ENCODE measurements at regions of chr15 and their contacts with region 1.

Region 1: GRCh38 chr15:73695804-73696640 is 11.8 kb downstream of the CD276 start:
- DNase-seq: no peak
- H3K4me3 ChIP-seq: peak overlapping the region in 1 of 3 donors; percentile 26
- H3K27ac ChIP-seq: peak overlapping the region; percentile 33 to 74
- H3K4me1 ChIP-seq: peaks cover 10 to 12% of the 10 kb centered on the region in 2 donors
- H3K27me3 ChIP-seq: no peaks in the 10 kb centered on the region
- CTCF ChIP-seq: no peak
- POLR2A ChIP-seq: no peak

Region 2: GRCh38 chr15:73674587-73674986 is 21.4 kb before region 1 on chr15:
- intact Hi-C with region 1: loop called (anchors 1 kb)
- DNase-seq: no peak
- H3K4me3 ChIP-seq: no peak overlapping the region
- H3K27ac ChIP-seq: no peak overlapping the region
- H3K4me1 ChIP-seq: no peaks in the 10 kb centered on the region
- H3K27me3 ChIP-seq: no peaks in the 10 kb centered on the region
- CTCF ChIP-seq: no peak
- POLR2A ChIP-seq: no peak

Measured in breast epithelium (tissue), 4 donors.